ENCODE measurements at regions of chr11 and their contacts with region 1.

Region 1: GRCh38 chr11:14384338-14384737 is 25.4 kb upstream of the RRAS2 start:
- DNase-seq: no peak
- H3K4me3 ChIP-seq: no peak overlapping the region
- H3K27ac ChIP-seq: no peak overlapping the region
- H3K4me1 ChIP-seq: peaks cover 6% of the 10 kb centered on the region
- H3K27me3 ChIP-seq: no peaks in the 10 kb centered on the region
- CTCF ChIP-seq: no peak
- EP300 ChIP-seq: no peak
- POLR2A ChIP-seq: no peak

Region 2: DNA sequence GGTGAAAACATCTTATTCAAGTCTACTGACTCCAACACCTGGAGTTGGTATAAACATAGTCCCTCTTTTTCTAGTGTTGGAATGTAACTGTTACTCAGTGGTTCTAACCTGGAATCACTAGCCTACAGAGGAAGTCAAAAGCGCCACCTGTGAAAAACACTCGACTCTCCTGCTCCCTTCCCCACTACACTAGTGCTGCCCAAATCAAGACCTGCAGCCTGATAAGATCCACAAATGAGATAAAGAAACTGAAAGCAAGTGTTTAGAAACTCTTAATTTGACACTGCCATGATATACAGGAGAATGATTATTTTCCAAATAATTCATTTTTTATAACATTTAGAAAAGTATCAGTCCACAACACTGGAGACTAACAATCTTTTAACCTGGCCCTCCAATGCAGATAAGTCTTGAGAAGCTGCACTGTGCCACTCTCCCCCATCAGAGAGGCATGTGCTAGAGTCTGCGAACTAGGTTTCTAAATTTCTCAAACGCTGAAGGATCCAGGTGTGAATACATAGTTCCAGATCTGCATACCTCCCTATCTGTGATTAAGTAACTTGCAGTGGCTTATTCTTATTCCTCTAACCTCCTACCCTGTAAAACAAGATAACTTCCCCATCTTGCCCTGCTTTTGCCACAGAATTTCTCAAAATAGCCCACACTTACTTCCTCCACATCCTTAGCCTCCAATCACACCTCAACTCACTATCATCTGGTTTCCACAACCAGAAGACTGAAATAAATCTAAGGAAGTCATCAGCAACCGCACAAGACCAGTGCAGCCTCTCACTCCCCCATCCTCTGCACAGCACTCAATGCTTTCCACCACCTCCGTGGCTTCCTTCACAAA is 113.4 kb before region 1 on chr11:
- intact Hi-C with region 1: no loop called
- DNase-seq: no peak
- H3K4me3 ChIP-seq: no peak overlapping the region
- H3K27ac ChIP-seq: no peak overlapping the region
- H3K4me1 ChIP-seq: no peaks in the 10 kb centered on the region
- H3K27me3 ChIP-seq: no peaks in the 10 kb centered on the region
- CTCF ChIP-seq: no peak
- EP300 ChIP-seq: no peak
- POLR2A ChIP-seq: no peak

Region 3: GRCh38 chr11:14373931-14374646 is 10.2 kb before region 1 on chr11:
- intact Hi-C with region 1: loop called in 1 of 4 experiments (anchors 1 kb)
- DNase-seq: no peak
- H3K4me3 ChIP-seq: no peak overlapping the region
- H3K27ac ChIP-seq: no peak overlapping the region
- H3K4me1 ChIP-seq: peaks cover 6% of the 10 kb centered on the region
- H3K27me3 ChIP-seq: no peaks in the 10 kb centered on the region
- CTCF ChIP-seq: no peak
- EP300 ChIP-seq: no peak
- POLR2A ChIP-seq: no peak